Mammary epithelial cell (primary cell): ENCODE measurements at regions of chr9 and their contacts with region 1.

Region 1: GRCh38 chr9:14314929-14315645 is 1.1 kb upstream of the NFIB start:
- DNase-seq: peak; percentile 85
- H3K4me3 ChIP-seq: peak overlapping the region; percentile 70 to 95 (median 92)
- H3K27ac ChIP-seq: peak overlapping the region; percentile 93
- H3K4me1 ChIP-seq: peaks cover 45% of the 10 kb centered on the region
- H3K27me3 ChIP-seq: no peaks in the 10 kb centered on the region
- CTCF ChIP-seq: peak in 1 of 2 donors; percentile 2

Region 2: DNA sequence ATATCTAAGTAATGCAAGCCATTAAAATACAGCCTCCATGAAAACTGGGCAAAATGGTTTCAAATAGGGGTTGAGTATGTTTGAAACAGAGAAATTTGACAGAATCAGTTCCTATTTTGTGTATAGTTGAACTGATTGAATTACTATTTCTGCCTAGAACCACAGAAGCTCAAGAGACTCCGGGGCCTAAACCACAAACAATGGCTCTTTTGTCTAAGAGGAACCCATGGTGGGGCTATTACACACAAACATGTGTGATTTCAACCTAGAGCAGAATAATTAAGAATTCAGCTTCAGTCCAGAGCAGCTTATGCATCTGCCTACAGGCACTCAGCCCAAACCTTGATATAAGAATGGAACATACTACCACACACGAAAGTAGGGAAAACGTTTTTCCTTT is 864.4 kb before region 1 on chr9:
- CTCF ChIA-PET with region 1: no interaction called
- dilution Hi-C with region 1: no loop called
- in situ Hi-C with region 1: no loop called
- intact Hi-C with region 1: loop called (anchors 5 kb)
- DNase-seq: peak; percentile 20
- H3K4me3 ChIP-seq: no peak overlapping the region
- H3K27ac ChIP-seq: no peak overlapping the region
- H3K4me1 ChIP-seq: no peaks in the 10 kb centered on the region
- H3K27me3 ChIP-seq: no peaks in the 10 kb centered on the region
- CTCF ChIP-seq: no peak

Region 3: GRCh38 chr9:13942695-13943094 is 372.4 kb before region 1 on chr9:
- CTCF ChIA-PET with region 1: no interaction called
- dilution Hi-C with region 1: no loop called
- in situ Hi-C with region 1: no loop called
- intact Hi-C with region 1: loop called (anchors 10 kb)
- DNase-seq: peak; percentile 99
- H3K4me3 ChIP-seq: no peak overlapping the region
- H3K27ac ChIP-seq: peak overlapping the region; percentile 78
- H3K4me1 ChIP-seq: peaks cover 47% of the 10 kb centered on the region
- H3K27me3 ChIP-seq: no peaks in the 10 kb centered on the region
- CTCF ChIP-seq: no peak

Region 4: DNA sequence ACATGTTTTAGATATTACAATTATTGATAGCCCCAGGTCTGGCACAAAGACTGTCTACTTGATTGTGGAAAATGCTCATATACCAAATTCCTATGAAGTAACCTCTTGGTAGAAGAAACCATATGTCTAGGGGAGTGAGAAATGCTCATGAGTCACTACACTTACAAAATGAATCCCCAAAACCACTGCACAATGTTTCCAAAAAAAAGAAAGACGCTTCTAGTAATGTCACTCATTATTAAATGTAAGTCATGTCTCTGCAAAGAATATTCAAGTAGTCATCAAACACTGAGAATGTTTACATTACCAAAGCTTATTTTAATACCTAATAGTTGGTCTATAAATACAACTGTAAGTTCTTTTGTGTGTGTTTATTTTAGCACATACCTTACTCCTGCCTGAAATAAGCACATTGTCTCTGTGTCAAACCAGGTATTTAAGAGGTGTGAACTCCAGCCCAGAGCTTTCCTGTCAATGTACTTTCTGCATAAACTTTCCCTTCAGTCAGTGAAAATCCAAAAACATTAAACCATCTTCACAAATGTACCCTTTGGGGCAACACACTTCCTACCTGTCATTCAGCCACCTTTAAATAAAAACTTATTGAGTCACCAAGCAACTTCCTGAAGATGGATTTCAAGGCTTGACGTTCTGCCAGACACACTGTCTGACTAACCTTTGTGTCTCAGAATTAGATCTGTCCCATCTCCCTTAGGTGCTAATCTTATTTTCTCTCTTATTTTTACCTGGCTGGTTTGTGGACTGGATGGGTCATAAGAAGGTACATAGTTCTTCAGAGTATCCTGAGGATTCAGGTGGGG is 195.2 kb before region 1 on chr9:
- CTCF ChIA-PET with region 1: no interaction called
- dilution Hi-C with region 1: no loop called
- in situ Hi-C with region 1: no loop called
- intact Hi-C with region 1: loop called (anchors 2 kb)
- DNase-seq: peak; percentile 80
- H3K4me3 ChIP-seq: no peak overlapping the region
- H3K27ac ChIP-seq: peak overlapping the region; percentile 25
- H3K4me1 ChIP-seq: peaks cover 18% of the 10 kb centered on the region
- H3K27me3 ChIP-seq: no peaks in the 10 kb centered on the region
- CTCF ChIP-seq: no peak

Region 5: DNA sequence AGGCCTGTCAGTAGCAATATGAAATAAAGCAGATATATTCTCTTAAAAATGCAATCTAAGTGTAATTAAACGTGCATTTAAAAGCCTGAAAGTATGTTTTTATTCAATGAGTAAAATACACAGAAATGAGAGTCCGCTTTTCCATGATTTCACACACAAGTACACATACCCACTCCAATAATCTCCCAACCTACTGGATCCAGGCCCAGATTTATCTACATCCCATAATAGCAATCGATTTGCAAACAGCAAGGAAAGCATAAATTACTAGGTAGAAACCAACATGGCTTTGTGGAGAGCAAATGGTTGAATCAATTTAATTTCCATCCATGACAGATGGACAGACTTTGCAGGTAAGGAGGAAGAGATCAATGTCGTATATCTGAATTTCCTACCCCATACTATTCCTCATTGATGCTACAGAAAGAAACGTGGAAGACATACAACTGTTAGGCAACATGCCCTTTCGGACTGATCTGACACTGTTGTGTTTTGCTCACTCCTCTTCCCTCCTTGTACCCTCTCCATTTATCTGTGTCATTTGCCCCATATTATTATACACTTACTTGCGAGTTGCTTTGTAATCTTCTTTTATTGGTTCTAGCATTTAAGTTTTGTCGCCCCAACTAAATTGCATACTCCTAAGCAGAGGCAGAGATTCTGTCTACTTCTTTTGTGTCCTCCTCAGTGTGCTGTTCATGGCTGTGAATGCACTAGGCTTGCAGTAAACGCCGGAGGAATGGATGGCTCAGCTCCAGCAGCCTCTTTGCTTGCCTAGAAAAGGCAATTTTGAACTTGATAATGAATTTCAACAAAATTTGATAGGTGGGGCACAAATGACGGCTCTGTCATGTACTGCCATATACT is 134.8 kb before region 1 on chr9:
- CTCF ChIA-PET with region 1: no interaction called
- dilution Hi-C with region 1: no loop called
- in situ Hi-C with region 1: no loop called
- intact Hi-C with region 1: loop called (anchors 2 kb)
- DNase-seq: peak; percentile 46
- H3K4me3 ChIP-seq: peak overlapping the region; percentile 23 to 57 (median 25)
- H3K27ac ChIP-seq: peak overlapping the region; percentile 97
- H3K4me1 ChIP-seq: peaks cover 47% of the 10 kb centered on the region
- H3K27me3 ChIP-seq: no peaks in the 10 kb centered on the region
- CTCF ChIP-seq: no peak

Region 6: DNA sequence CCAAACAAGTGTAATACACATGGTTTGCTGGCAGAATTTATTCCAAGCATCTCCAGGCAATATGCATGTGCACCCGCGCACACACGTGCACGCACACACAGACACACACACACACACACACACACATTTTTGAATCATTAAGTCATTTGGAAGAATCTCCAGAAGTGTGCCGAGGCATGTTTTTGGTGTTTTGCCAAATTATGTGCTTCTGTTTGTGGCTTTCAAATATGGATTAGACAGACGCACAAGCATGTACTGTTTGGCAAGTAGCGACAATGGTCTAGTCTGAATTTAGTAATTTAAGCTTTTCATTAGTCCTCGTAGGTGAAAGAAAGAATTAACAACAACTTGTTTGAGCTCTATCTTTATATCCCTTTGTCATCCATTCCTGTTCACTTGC is 37.8 kb before region 1 on chr9:
- CTCF ChIA-PET with region 1: no interaction called
- dilution Hi-C with region 1: no loop called
- in situ Hi-C with region 1: no loop called
- intact Hi-C with region 1: loop called (anchors 2 kb)
- DNase-seq: peak; percentile 92
- H3K4me3 ChIP-seq: peak overlapping the region; percentile 5 to 18 (median 10)
- H3K27ac ChIP-seq: peak overlapping the region; percentile 75
- H3K4me1 ChIP-seq: peaks cover 46% of the 10 kb centered on the region
- H3K27me3 ChIP-seq: no peaks in the 10 kb centered on the region
- CTCF ChIP-seq: no peak

Region 7: GRCh38 chr9:14347406-14348122 is 32.5 kb after region 1 on chr9:
- CTCF ChIA-PET with region 1: no interaction called
- dilution Hi-C with region 1: no loop called
- in situ Hi-C with region 1: no loop called
- intact Hi-C with region 1: loop called (anchors 5 kb)
- DNase-seq: peak; percentile 67
- H3K4me3 ChIP-seq: peak overlapping the region; percentile 45 to 52 (median 46)
- H3K27ac ChIP-seq: peak overlapping the region; percentile 6
- H3K4me1 ChIP-seq: peaks cover 69% of the 10 kb centered on the region
- H3K27me3 ChIP-seq: peaks cover 7% of the 10 kb centered on the region
- CTCF ChIP-seq: no peak

Region 8: GRCh38 chr9:14451949-14452348 is 136.9 kb after region 1 on chr9:
- CTCF ChIA-PET with region 1: no interaction called
- dilution Hi-C with region 1: no loop called
- in situ Hi-C with region 1: no loop called
- intact Hi-C with region 1: no loop called
- DNase-seq: no peak
- H3K4me3 ChIP-seq: no peak overlapping the region
- H3K27ac ChIP-seq: no peak overlapping the region
- H3K4me1 ChIP-seq: no peaks in the 10 kb centered on the region
- H3K27me3 ChIP-seq: peaks cover 4% of the 10 kb centered on the region
- CTCF ChIP-seq: no peak

Region 9: GRCh38 chr9:14909961-14910805 is 595.1 kb after region 1 on chr9 and contains the start of gene FREM1:
- CTCF ChIA-PET with region 1: no interaction called
- dilution Hi-C with region 1: no loop called
- in situ Hi-C with region 1: no loop called
- intact Hi-C with region 1: no loop called
- DNase-seq: no peak
- H3K4me3 ChIP-seq: no peak within 1 kb of the TSS
- H3K27ac ChIP-seq: no peak within 1 kb of the TSS
- H3K4me1 ChIP-seq: no peaks in the 10 kb centered on the region
- H3K27me3 ChIP-seq: no peaks in the 10 kb centered on the region
- CTCF ChIP-seq: no peak
- total RNA-seq, gene FREM1: not detected